ENCODE measurements at regions of chr14 and their contacts with region 1.

Region 1: GRCh38 chr14:51989293-51990234 is at the start of gene RTRAF:
- DNase-seq: peak; percentile 89
- H3K4me3 Mint-ChIP-seq: peak within 1 kb of the TSS; percentile 94
- H3K27ac Mint-ChIP-seq: peak within 1 kb of the TSS; percentile 91
- H3K4me1 Mint-ChIP-seq: peaks cover 31% of the 10 kb centered on the region
- H3K27me3 Mint-ChIP-seq: no peaks in the 10 kb centered on the region
- total RNA-seq, gene RTRAF: 215 and 230 TPM in 2 replicates

Region 2: DNA sequence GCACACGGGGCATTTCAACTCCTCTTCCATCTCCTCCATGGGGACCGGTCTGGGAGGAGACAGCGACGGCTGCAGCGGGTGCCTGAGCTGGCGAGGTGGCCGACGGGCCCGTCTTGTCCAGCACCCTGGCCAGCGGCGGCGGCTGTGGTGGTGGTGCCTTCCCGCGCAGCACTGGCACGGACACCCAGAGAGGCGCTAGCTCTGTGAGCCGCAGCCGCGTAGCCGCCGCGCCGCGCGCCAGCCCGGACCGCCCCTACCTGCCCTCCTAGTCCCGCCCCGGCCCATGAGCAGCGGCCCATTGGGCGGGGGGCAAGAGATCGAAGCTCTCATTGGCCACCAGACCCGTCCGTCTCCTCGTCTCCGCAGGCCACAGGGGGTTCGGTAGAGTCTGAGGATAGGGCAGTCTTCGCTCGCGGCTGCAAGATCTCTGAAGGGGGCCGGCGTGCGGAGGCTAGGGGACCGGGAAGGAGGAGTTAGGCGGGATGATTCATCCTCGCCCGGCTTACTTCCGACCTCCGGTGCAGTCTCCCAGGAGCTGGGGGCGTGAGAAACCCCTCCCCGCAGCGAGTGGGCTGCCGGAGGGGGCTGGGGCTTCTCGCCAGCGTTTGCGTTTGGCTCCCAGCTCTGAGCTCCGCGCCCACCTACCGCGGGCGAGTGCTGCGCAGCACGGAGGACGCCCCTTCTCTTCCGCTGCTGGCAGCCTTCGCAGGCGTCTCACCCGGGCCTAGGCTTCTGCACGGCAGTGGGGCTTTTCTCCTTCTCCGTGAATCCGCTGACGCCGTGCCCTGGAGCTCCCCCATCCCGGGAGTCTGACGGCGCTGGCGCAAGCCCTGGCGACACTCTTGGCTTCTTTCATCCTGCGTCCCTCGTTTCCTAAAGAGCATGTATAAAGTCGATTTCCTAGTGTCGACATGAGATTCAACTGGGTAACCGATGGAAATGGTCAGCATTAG is 894.4 kb before region 1 on chr14 and contains the start of gene TRIM9:
- intact Hi-C with region 1: loop called (anchors 10 kb)
- DNase-seq: peak; percentile 84
- H3K4me3 Mint-ChIP-seq: peak within 1 kb of the TSS; percentile 88
- H3K27ac Mint-ChIP-seq: peak within 1 kb of the TSS; percentile 65
- H3K4me1 Mint-ChIP-seq: peaks cover 11% of the 10 kb centered on the region
- H3K27me3 Mint-ChIP-seq: peaks cover 51% of the 10 kb centered on the region
- total RNA-seq, gene TRIM9: 0.31 TPM in 1 of 2 replicates, not detected in the other

Region 3: GRCh38 chr14:51239813-51240803 is 749.5 kb before region 1 on chr14 and contains the start of gene TMX1:
- intact Hi-C with region 1: loop called (anchors 1 kb)
- DNase-seq: peak; percentile 87
- H3K4me3 Mint-ChIP-seq: no peak within 1 kb of the TSS
- H3K27ac Mint-ChIP-seq: no peak within 1 kb of the TSS
- H3K4me1 Mint-ChIP-seq: peaks cover 12% of the 10 kb centered on the region
- H3K27me3 Mint-ChIP-seq: no peaks in the 10 kb centered on the region
- total RNA-seq, gene TMX1: 51.1 and 51.3 TPM in 2 replicates

Region 4: GRCh38 chr14:51860164-51860824 is 129.3 kb before region 1 on chr14 and contains the start of gene GNG2:
- intact Hi-C with region 1: loop called (anchors 1 kb)
- DNase-seq: peak; percentile 77
- H3K4me3 Mint-ChIP-seq: peak within 1 kb of the TSS; percentile 95
- H3K27ac Mint-ChIP-seq: peak within 1 kb of the TSS; percentile 88
- H3K4me1 Mint-ChIP-seq: peaks cover 63% of the 10 kb centered on the region
- H3K27me3 Mint-ChIP-seq: peaks cover 2% of the 10 kb centered on the region
- total RNA-seq, gene GNG2: 126 and 128 TPM in 2 replicates

Region 5: DNA sequence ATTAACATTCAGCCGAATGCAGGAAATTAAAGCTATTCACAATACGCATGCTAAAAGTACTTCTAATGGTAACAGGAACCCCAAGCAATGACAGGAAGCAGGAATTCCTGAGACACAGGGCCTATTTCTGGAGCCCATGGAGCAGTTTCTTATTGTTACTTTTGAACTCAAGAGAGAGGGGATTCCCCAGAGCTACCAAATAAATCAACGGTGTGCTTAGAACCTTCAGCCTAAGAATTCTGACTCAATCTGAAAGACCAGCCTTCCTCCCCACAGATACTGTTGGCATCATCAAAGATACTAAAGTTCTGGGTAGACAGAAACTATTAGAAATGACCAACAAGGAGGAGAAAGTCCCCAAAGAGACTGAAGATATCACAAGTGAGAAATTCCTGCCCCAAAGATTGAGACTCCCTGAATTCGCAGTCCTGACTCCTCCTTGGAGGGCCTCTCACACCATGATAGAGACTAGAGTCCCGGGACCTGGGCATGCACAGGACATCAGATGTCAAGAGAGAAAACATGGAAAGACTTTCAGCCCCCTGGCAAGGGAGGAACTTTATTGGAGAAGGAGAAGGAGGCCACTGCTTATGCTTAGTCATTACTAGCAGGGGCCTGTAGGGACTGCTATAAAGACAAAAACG is 32.5 kb after region 1 on chr14:
- intact Hi-C with region 1: loop called (anchors 2 kb)
- DNase-seq: no peak
- H3K4me3 Mint-ChIP-seq: no peak overlapping the region
- H3K27ac Mint-ChIP-seq: no peak overlapping the region
- H3K4me1 Mint-ChIP-seq: peaks cover 33% of the 10 kb centered on the region
- H3K27me3 Mint-ChIP-seq: no peaks in the 10 kb centered on the region

Region 6: DNA sequence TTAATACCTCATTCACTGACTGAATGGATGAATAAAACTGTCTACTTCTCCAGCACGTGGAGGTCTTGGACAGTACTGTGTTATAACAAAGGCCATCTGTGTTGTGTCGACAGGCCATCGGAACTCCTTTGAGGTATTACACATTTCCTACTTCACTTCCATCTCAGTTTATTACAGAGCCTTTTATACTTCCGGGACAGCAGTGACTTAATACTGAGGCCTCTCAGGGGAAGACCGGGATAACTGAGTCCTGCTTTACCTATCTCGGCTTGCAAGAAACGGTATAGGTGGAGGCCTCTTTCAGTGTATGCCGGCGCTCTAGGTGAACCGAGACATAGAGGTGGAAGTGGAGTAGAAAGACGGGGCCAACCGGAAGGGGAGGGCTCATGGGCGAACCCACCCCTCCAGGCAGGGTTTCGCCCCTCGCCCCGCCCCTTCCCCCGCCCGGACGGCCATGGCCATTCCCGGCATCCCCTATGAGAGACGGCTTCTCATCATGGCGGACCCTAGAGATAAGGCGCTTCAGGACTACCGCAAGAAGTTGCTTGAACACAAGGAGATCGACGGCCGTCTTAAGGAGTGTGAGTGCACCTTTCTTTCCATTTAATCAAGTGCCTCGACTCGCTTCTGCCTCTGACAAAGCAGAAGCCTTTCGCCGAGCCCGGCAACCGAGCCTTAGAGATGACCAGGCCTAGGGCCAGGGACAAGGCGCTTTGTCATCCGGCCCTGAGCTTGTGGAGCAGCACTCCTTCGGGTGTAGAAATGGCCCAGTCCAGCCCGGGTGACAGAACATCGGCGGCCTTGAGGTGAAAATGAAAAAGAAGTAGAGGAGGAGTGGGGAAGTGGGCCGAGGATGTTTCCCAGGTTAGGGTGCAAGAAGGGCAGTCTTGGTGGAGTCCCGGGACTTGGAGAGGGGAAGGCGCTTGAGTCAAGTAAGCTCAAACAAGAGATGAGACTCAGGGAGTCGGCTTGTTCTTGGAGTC is 717.5 kb after region 1 on chr14 and contains the start of gene PSMC6:
- intact Hi-C with region 1: loop called (anchors 5 kb)
- DNase-seq: peak; percentile 86
- H3K4me3 Mint-ChIP-seq: peak within 1 kb of the TSS; percentile 100
- H3K27ac Mint-ChIP-seq: peak within 1 kb of the TSS; percentile 97
- H3K4me1 Mint-ChIP-seq: peaks cover 41% of the 10 kb centered on the region
- H3K27me3 Mint-ChIP-seq: peaks cover 3% of the 10 kb centered on the region
- total RNA-seq, gene PSMC6: 130 and 132 TPM in 2 replicates